Head of caudate nucleus (tissue), 42 donors: ENCODE measurements at regions of chr11 and their contacts with region 1.

Region 1: GRCh38 chr11:20337526-20338154 is 25.9 kb upstream of the HTATIP2 start:
- DNase-seq: peak in 34 of 42 donors; percentile 7 to 85 (median 45)

Region 2: DNA sequence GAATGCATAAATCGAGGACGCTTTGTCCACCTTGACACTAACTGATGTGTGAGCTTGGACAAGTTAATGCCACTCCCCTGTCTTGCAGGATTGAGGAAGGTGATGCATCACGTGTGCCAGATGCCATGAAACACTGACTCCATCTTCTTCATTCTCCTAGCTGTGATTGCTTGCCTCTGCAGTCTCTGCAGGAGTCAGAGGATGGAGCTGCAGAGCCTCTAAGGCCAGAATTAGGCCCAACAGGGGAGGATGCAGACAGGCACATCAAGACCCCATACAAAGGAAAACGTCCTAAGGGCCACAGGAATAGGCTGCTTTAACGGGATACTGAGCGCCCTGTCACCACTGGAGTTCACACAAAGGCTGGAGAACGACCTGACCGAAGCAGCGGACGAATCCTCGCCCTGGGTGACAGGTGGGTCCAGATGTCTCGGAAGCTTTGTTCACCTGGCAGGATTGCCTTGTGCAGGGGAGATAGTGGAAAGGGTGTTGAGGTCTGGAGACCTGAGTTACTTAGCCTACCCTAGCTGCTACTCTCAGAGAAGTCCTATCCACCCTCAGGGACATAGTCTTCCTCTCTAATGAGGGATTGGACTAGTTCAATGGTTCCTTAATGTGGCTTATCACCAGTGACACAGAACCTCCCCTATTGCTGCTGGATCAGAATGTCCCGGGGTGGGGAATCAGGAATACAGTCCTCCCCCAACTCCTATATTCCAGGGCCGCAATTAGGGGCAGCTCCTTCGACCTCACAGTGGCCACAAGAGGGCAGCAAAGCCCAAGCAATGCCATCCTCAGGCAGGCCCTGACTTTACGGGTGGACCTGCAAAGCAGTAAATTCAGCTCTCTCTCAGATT is 209.7 kb before region 1 on chr11:
- intact Hi-C with region 1: loop called (anchors 5 kb)
- DNase-seq: peak; percentile 62 to 96 (median 90)